Activated naive CD4-positive, alpha-beta T cell treated with anti-CD3 and anti-CD28 coated beads for 36 hours (primary cell): ENCODE measurements at regions of chr17 and their contacts with region 1.

Region 1: DNA sequence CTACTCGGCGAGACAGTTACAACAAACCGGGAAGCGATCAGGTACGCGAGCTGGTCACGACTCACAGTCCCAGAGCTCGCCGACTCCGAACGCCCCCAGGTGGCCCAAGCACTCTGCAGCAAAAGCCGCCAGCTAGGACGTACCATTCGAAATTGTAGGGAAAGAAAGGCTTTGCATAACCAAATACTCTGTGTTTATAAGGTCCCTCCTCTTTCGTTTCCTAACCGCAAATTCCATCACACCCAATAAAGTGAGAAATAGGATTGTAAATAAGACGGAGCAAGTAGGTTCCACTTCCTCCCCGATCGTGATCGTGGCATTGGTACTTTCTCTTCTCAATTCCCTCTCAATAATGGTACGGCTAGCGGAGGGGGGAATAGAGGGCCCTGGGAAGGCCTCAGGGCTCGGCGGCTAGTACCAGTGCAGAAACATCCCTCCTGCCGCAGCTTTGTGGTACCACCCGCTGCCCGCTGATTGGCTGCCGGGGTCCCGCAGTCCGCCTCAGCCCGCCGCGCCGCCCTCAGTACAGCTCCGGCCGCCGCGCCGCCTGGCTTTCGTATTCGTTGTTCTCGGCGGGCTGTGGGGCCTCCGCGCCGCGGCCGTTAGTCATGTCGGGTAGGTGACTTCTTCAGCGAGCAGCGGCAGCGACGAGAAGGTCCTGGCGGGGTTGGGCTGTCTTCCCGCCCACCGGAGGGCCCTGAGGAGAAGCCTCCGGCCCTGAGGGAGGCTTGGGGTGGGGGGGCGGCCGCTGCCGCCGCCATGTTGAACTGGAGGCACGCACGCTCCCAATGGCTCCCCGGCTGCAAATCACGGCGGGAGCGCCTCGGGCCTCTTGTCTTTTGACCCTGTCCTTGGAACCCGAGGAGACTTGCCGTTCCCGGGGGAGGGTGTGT is at the start of gene TAF15:
- DNase-seq: peak; percentile 98
- H3K4me3 Mint-ChIP-seq: peak within 1 kb of the TSS; percentile 83
- H3K27ac Mint-ChIP-seq: peak within 1 kb of the TSS; percentile 99
- H3K4me1 Mint-ChIP-seq: peaks cover 55% of the 10 kb centered on the region
- H3K27me3 Mint-ChIP-seq: no peaks in the 10 kb centered on the region
- total RNA-seq, gene TAF15: 252 to 256 TPM

Region 2: DNA sequence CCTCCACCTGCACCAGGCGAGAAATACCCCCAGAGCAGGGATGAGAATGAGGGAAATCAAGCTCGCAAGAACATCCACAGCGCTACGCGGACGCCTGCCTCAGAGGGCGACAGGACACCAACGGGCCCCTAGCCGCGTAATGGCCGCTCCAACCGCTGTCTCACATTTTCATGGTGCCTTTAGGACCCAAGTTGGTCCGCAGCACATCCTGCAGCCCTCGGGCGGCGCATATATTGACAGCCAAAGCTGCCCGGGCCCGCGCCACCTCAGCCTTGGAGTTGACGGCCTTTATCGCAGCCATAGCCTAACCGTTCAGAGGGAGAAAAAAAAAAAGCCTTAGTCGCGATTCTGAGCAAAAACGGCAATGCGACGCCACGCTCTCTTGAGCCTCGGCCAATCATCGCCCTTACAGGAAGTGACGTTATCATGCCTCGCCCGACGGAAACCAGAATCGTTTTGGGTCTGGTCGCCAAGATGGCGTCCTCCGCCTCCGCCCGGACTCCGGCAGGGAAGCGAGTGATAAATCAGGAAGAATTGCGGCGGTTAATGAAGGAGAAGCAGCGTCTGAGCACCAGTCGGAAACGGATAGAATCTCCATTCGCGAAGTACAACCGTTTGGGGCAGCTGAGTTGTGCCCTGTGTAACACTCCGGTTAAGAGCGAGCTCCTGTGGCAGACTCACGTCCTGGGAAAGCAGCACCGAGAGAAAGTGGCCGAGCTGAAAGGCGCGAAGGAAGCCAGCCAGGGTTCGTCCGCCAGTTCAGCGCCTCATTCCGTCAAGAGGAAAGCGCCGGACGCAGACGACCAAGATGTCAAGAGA is 847.9 kb before region 1 on chr17 and contains the starts of genes CCT6B and ZNF830:
- CTCF ChIA-PET with region 1: no interaction called
- intact Hi-C with region 1: loop called (anchors 5 kb)
- DNase-seq: peak; percentile 97
- H3K4me3 Mint-ChIP-seq: peak within 1 kb of the TSS; percentile 99
- H3K27ac Mint-ChIP-seq: peak within 1 kb of the TSS; percentile 98
- H3K4me1 Mint-ChIP-seq: peaks cover 22% of the 10 kb centered on the region
- H3K27me3 Mint-ChIP-seq: no peaks in the 10 kb centered on the region
- total RNA-seq, gene CCT6B: 0.69 to 1.5 TPM
- total RNA-seq, gene ZNF830: 17.6 to 18.7 TPM

Region 3: GRCh38 chr17:35373534-35373983 is 435.6 kb before region 1 on chr17 and contains the start of gene SLFN11:
- CTCF ChIA-PET with region 1: no interaction called
- intact Hi-C with region 1: loop called (anchors 10 kb)
- DNase-seq: peak; percentile 93
- H3K4me3 Mint-ChIP-seq: peak within 1 kb of the TSS; percentile 96
- H3K27ac Mint-ChIP-seq: peak within 1 kb of the TSS; percentile 99
- H3K4me1 Mint-ChIP-seq: peaks cover 52% of the 10 kb centered on the region
- H3K27me3 Mint-ChIP-seq: no peaks in the 10 kb centered on the region
- total RNA-seq, gene SLFN11: 46.4 to 49.6 TPM

Region 4: GRCh38 chr17:35578197-35578928 is 230.8 kb before region 1 on chr17 and contains the start of gene PEX12:
- CTCF ChIA-PET with region 1: interaction called, 3 read pairs
- intact Hi-C with region 1: loop called (anchors 2 kb)
- DNase-seq: peak; percentile 93
- H3K4me3 Mint-ChIP-seq: peak within 1 kb of the TSS; percentile 93
- H3K27ac Mint-ChIP-seq: peak within 1 kb of the TSS; percentile 98
- H3K4me1 Mint-ChIP-seq: peaks cover 19% of the 10 kb centered on the region
- H3K27me3 Mint-ChIP-seq: no peaks in the 10 kb centered on the region
- total RNA-seq, gene PEX12: 6.2 to 6.5 TPM

Region 5: DNA sequence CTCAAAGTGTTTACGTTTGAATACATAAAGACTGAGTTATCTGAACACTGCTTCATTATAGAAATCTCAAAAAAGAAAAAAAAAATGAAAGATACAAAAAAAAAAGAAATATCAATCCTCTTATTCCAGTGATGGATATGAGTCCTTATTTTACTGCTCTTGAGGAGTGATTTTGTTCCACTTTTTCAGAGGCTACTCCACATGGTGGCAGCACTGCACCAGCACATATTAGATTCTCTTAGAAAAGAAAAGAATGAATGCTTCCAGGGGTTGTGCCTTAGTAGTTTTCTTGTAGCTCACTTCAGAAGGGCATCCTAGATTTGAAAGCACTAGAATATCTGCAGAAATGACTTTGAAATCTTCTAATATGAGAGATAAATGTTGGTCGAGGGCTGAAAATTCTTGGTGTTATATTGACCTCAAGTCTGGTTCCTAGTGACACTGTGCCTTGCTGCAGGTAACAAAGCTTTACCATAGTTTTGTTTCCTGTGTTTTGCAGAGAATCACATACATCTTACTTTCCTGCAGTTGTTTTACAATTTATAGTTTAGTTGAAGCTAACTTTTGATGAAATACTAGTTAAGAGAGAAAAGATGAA is 196.2 kb before region 1 on chr17:
- CTCF ChIA-PET with region 1: interaction called, 3 read pairs
- intact Hi-C with region 1: loop called (anchors 1 kb)
- DNase-seq: peak; percentile 72
- H3K4me3 Mint-ChIP-seq: no peak overlapping the region
- H3K27ac Mint-ChIP-seq: no peak overlapping the region
- H3K4me1 Mint-ChIP-seq: no peaks in the 10 kb centered on the region
- H3K27me3 Mint-ChIP-seq: no peaks in the 10 kb centered on the region

Region 6: GRCh38 chr17:35788504-35789368 is 20.5 kb before region 1 on chr17:
- CTCF ChIA-PET with region 1: interaction called, 10 read pairs
- intact Hi-C with region 1: no loop called
- DNase-seq: peak; percentile 21
- H3K4me3 Mint-ChIP-seq: no peak overlapping the region
- H3K27ac Mint-ChIP-seq: no peak overlapping the region
- H3K4me1 Mint-ChIP-seq: peaks cover 25% of the 10 kb centered on the region
- H3K27me3 Mint-ChIP-seq: peaks cover 6% of the 10 kb centered on the region